ENCODE measurements at regions of chr3 and their contacts with region 1.

Region 1: GRCh38 chr3:38662544-38662943 is 13.1 kb upstream of the SCN5A start:
- DNase-seq: peak; percentile 30
- H3K4me3 Mint-ChIP-seq: no peak overlapping the region
- H3K27ac Mint-ChIP-seq: no peak overlapping the region
- H3K4me1 Mint-ChIP-seq: no peaks in the 10 kb centered on the region
- H3K27me3 Mint-ChIP-seq: peaks cover 59% of the 10 kb centered on the region
- CTCF ChIP-seq: no peak

Region 2: DNA sequence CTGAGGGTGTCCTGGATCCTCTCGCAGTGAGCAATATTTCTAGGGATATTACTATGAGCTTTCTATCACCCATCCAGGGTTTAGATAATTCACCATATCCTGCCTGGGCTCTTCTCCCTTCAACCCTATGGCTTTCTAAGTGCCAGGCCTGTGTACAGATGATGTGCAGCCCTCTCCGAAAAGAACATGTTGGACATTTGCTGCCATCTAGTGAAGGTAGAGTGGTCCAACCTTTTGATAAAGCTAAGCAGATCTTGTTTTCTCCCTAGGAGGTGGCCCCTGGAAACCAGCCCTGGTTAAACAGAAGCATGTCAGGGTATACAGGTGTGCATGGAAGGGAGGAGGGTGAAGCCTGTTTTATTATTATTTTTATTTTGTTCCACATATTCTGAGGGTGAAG is 181.4 kb after region 1 on chr3:
- CTCF ChIA-PET with region 1: no interaction called
- intact Hi-C with region 1: loop called (anchors 10 kb)
- DNase-seq: peak; percentile 37
- H3K4me3 Mint-ChIP-seq: no peak overlapping the region
- H3K27ac Mint-ChIP-seq: no peak overlapping the region
- H3K4me1 Mint-ChIP-seq: no peaks in the 10 kb centered on the region
- H3K27me3 Mint-ChIP-seq: peaks cover 43% of the 10 kb centered on the region
- CTCF ChIP-seq: peak; percentile 23